Cardiac septum (tissue), 1 donor: ENCODE measurements at regions of chr11 and their contacts with region 1.

Region 1: DNA sequence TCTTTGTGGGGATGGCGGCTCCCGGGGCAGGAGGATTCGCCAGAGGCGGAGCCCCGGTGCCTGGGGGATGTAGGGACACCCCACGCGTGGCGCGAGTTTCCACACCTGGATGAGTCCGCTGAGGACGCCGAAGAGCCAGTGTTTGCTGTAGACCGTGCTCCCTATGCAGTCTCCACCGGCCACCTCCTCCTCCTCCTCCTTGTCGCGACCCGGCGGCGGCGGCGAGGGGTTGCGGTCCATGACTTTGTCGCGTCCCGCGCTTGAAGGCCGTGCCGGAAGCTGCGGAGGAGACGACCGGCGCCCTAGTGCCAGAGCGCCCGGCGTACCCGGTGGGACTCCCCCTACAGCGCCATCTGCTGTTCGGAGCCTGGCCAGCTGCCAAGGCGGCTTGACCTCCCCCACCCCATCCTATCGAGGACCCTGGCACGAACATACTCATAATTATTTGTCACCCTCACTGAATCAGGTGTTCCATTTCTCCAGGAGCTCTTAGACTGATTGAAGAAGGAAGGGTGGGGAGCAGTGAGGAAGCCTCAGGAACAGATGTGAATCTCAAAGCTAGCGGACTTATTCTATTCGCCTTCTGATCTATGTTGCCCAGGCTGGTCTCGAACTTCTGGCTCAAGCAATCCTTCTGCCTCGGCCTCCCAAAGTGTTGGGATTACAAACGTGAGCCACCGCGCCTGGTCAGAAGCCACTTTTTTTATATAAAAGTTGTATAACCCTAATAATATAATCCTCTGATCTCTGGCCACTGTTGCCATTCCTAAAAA is at the start of gene SAAL1:
- DNase-seq: peak; percentile 92
- total RNA-seq, gene SAAL1: 9.3 TPM

Region 2: DNA sequence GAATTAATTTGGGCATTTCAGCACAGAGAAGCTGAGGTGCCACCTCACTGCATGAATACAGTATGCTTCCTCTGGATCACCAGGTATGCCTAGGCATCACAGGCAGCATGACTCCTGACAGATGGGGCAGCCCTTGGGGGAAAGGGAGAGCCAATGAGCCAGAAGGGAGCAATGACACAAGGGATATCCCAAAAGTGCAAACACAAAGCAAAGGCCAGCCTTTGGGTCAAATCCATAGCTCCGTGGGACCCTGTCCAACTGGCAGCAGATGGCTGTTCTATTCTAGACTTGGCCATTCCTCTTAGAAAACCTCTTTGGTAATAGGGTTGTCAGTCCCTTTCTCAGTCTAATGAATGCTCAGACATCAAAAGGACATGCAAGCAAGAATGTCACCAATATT is 166.4 kb before region 1 on chr11:
- intact Hi-C with region 1: no loop called
- DNase-seq: no peak

Region 3: DNA sequence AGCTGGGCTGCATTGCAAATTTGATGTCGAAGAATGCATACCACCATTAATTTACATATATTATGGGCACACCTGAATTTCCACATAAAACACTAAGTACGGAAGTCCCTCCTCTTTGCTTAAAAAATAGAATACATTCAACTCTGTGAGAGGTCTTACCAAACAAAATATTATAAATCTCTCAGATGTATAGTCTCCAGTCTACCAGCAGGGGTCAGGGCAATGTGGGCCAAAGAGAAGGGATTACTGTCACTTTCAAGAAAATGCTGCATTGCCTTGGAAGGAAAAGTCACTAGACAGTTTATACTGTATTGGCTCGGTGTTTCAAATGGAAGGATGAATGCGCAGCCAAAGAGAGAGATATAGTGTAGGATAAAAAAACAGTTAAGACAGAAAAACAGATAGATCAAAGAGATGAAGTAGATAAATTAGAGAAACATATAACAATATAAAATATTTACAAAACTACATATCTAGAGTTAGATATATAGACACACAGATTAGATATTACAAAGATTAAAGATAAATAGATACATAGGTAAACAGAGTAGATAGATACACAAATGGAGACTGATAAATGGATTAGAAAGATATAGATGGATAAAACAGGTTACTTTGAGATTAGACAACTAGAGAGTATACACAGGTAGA is 114.1 kb before region 1 on chr11:
- intact Hi-C with region 1: loop called (anchors 5 kb)
- DNase-seq: no peak

Region 4: GRCh38 chr11:18012863-18013781 is 92.9 kb before region 1 on chr11 and contains the start of gene SERGEF:
- intact Hi-C with region 1: loop called (anchors 5 kb)
- DNase-seq: peak; percentile 96
- total RNA-seq, gene SERGEF: 22.4 TPM